ENCODE measurements at regions of chr11 and their contacts with region 1.

Region 1: GRCh38 chr11:1546536-1547400 is 25.3 kb downstream of the DUSP8 start:
- DNase-seq: peak; percentile 73
- ATAC-seq: peak; percentile 63
- H3K4me3 Mint-ChIP-seq: peak overlapping the region; percentile 53
- H3K27ac Mint-ChIP-seq: no peak overlapping the region
- H3K4me1 Mint-ChIP-seq: peaks cover 4% of the 10 kb centered on the region; the same call in 1 of the 2 replicates
- H3K27me3 Mint-ChIP-seq: peaks cover 59% of the 10 kb centered on the region
- CTCF ChIP-seq: peak; percentile 76

Region 2: DNA sequence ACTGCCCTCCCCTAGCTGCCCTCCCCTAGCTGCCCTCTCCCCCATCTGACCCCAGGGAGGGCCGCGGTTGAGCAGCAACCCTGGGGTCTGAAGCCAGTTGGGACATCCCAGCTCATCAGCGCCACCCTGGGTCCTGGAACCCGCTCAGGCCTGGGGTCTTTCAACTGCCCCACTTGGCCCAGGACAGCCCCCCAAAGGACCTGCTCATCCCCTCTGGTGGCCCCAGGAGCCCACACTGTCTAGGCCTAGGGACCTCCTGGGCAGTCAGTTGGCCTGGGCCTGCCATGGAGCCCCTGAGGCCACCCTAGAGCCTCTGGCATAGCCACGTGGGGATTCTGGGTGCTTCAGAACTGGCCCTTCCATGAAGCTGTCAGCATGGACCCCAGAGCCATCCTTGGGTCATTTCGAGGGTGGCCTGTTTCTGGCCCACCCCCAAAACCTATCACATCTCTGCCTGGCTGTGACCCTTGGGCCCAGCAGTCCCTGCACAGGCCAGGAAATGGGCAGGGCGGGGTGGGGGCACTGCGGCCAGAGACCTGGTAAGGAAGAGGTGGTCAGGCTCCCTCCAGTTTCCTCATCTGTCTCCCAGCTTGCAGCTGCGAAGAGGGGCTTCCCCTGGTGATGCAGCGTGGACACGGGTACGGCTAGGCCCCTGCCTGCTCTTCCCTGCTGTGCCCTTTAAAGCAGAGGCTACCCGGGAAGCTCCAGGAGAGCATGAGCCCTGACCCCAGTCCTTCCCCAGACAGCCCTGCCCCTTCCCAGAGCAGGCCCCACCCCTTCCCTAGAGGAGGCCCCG is 434.2 kb before region 1 on chr11:
- CTCF ChIA-PET with region 1: no interaction called
- POLR2A ChIA-PET with region 1: no interaction called
- DNase-seq: peak; percentile 17
- ATAC-seq: no peak
- H3K4me3 Mint-ChIP-seq: no peak overlapping the region
- H3K27ac Mint-ChIP-seq: no peak overlapping the region
- H3K4me1 Mint-ChIP-seq: no peaks in the 10 kb centered on the region
- H3K27me3 Mint-ChIP-seq: no peaks in the 10 kb centered on the region
- CTCF ChIP-seq: no peak

Region 3: GRCh38 chr11:1521382-1522080 is 25.2 kb before region 1 on chr11:
- CTCF ChIA-PET with region 1: interaction called, 10 read pairs
- POLR2A ChIA-PET with region 1: no interaction called
- DNase-seq: no peak
- ATAC-seq: no peak
- H3K4me3 Mint-ChIP-seq: no peak overlapping the region
- H3K27ac Mint-ChIP-seq: no peak overlapping the region; the same call in 1 of the 2 replicates
- H3K4me1 Mint-ChIP-seq: peaks cover 9% of the 10 kb centered on the region
- H3K27me3 Mint-ChIP-seq: no peaks in the 10 kb centered on the region
- CTCF ChIP-seq: no peak

Region 4: GRCh38 chr11:1564535-1565172 is 17.9 kb after region 1 on chr11:
- CTCF ChIA-PET with region 1: interaction called, 457 read pairs
- POLR2A ChIA-PET with region 1: interaction called, 9 read pairs
- DNase-seq: peak; percentile 80
- ATAC-seq: peak; percentile 70
- H3K4me3 Mint-ChIP-seq: no peak overlapping the region
- H3K27ac Mint-ChIP-seq: no peak overlapping the region
- H3K4me1 Mint-ChIP-seq: peaks cover 13% of the 10 kb centered on the region
- H3K27me3 Mint-ChIP-seq: peaks cover 26% of the 10 kb centered on the region
- CTCF ChIP-seq: no peak

Region 5: GRCh38 chr11:1586699-1587098 is 39.9 kb after region 1 on chr11:
- CTCF ChIA-PET with region 1: interaction called, 14 read pairs
- POLR2A ChIA-PET with region 1: no interaction called
- DNase-seq: no peak
- ATAC-seq: no peak
- H3K4me3 Mint-ChIP-seq: no peak overlapping the region
- H3K27ac Mint-ChIP-seq: no peak overlapping the region
- H3K4me1 Mint-ChIP-seq: peaks cover 4% of the 10 kb centered on the region
- H3K27me3 Mint-ChIP-seq: peaks cover 30% of the 10 kb centered on the region
- CTCF ChIP-seq: no peak

Region 6: DNA sequence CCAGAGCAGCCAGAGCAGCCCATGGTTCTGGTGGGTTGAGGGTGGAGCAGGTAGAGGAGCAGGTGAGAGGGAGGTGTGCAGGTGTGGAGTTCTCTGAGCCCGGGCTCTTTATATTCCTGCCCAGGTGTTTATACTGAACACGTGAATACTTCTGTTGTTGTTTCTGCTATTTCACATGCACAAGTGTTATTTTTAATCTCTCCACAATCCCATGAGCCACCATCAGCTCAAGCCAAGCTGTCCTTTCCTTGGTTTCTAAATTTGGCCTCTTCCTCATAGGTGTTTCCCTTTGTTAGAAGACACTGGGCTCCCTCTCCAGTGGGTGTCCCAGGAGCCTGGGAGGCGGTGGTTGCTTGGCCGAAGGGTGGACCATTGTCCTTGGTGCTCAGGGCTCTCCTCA is 61.6 kb after region 1 on chr11 and contains the start of gene KRTAP5-3:
- CTCF ChIA-PET with region 1: interaction called, 14 read pairs
- POLR2A ChIA-PET with region 1: no interaction called
- DNase-seq: no peak
- ATAC-seq: no peak
- H3K4me3 Mint-ChIP-seq: no peak within 1 kb of the TSS
- H3K27ac Mint-ChIP-seq: no peak within 1 kb of the TSS
- H3K4me1 Mint-ChIP-seq: peaks cover 12% of the 10 kb centered on the region
- H3K27me3 Mint-ChIP-seq: peaks cover 26% of the 10 kb centered on the region
- CTCF ChIP-seq: no peak
- total RNA-seq, gene KRTAP5-3: not detected in 3 replicates

Region 7: DNA sequence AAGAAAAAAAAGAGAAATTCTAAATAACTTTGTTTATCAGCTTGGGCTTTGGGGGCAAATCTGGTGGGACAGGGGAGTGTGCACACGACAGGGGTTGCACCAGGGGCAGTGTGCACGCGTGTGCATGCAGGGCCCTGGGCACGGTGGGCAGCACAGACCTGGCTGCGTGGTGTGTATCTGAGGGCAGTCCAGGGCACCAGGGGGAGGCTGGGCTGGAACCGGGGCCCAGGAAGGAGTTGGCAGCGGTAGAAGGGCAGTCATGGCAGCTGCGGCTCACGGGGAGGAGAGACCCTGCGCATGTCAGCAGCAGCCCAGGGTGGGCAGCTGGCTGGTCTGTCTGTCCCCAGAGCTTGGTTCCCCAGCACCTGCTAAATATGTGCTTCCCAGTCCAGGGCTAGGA is 87.1 kb after region 1 on chr11:
- CTCF ChIA-PET with region 1: interaction called, 19 read pairs
- POLR2A ChIA-PET with region 1: no interaction called
- DNase-seq: no peak
- ATAC-seq: no peak
- H3K4me3 Mint-ChIP-seq: no peak overlapping the region
- H3K27ac Mint-ChIP-seq: no peak overlapping the region
- H3K4me1 Mint-ChIP-seq: peaks cover 8% of the 10 kb centered on the region
- H3K27me3 Mint-ChIP-seq: peaks cover 42% of the 10 kb centered on the region
- CTCF ChIP-seq: no peak

Region 8: GRCh38 chr11:1749414-1750312 is 202.9 kb after region 1 on chr11:
- CTCF ChIA-PET with region 1: no interaction called
- POLR2A ChIA-PET with region 1: no interaction called
- DNase-seq: no peak
- ATAC-seq: peak; percentile 6
- H3K4me3 Mint-ChIP-seq: peak overlapping the region; percentile 57
- H3K27ac Mint-ChIP-seq: no peak overlapping the region
- H3K4me1 Mint-ChIP-seq: peaks cover 12% of the 10 kb centered on the region
- H3K27me3 Mint-ChIP-seq: peaks cover 51% of the 10 kb centered on the region
- CTCF ChIP-seq: no peak

Region 9: DNA sequence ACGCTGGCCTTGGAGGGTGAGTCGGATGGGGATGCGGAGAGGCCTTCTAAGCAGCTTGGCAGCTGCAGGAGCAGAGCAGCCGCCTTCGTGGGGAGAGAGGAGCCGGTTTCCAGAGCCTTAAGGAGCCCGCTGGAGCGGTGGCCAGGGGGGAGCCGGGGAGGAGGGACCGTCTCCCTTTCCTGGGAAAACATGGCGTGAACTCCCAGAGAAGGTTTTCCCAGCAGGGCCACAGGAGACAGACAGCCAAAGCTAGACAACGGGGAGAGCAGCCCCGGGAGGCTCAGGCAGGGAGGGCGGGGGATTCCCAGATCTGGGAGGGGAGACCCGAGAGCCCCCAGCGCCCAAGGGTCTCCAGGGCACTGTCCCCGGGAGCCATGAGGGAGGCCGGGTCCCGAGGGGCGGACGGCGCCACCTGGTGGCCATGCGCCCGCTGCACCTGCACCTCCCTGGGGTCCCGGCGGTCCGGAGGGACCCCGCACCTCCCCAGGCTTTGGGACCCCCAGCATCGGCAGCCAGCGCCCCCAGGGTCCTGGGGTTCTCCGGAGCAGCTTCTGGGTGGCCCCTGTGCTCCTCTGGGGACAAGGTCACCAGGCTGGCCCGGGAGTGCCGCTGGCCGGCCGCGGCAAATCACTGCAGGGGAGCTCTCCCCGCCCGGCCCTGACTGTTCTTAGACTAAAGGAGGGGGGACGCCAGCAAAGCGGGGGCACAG is 285.6 kb after region 1 on chr11:
- CTCF ChIA-PET with region 1: interaction called, 13 read pairs
- POLR2A ChIA-PET with region 1: no interaction called
- DNase-seq: peak; percentile 77
- ATAC-seq: peak; percentile 75
- H3K4me3 Mint-ChIP-seq: peak overlapping the region; percentile 49
- H3K27ac Mint-ChIP-seq: no peak overlapping the region
- H3K4me1 Mint-ChIP-seq: 0 out of 2 replicates have a peak, but pooled peaks cover 2% of the 10 kb centered on the region
- H3K27me3 Mint-ChIP-seq: peaks cover 5% of the 10 kb centered on the region
- CTCF ChIP-seq: peak; percentile 97